ENCODE measurements at regions of chr17 and their contacts with region 1.

Region 1: DNA sequence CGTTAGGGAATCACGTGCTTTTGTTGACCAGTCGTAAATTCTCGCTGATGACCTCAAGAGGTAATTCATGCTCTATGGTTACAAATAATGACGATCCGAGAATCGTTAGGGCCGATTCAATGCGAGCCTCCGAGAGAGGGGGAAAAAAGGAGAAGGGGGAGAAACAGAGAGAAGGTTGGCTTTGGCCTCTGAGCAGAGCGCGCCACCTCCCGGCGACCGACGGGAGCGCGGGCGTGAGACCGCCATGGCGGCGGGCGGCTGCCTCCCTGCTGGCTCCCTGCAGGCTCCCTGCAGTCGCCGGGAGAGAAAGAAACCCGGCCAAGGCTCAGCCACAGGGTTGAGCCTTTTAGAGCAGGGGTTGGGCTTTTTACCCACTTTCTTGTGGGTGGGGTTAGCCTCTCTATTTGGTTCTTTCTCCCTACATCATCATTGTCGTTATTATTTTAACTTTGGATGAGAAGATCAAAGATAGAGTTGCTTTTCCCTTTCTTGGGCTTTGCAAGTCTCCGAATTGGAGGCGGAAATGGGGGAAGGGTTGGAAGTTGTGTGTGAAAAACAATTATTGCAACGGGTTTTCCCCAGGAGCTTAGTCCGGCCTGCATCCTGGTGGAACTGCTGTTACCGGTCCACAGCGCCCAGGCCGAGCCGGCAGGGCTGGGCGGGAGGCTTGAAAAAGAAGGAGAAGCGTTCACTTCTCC is 410 bp upstream of the HOXB5 start:
- DNase-seq: peak; percentile 85
- ATAC-seq: peak; percentile 66
- H3K4me3 Mint-ChIP-seq: peak overlapping the region; percentile 71
- H3K27ac Mint-ChIP-seq: no peak overlapping the region
- H3K4me1 Mint-ChIP-seq: peaks cover 53% of the 10 kb centered on the region
- H3K27me3 Mint-ChIP-seq: peaks cover 73% of the 10 kb centered on the region
- CTCF ChIP-seq: peak; percentile 50

Region 2: DNA sequence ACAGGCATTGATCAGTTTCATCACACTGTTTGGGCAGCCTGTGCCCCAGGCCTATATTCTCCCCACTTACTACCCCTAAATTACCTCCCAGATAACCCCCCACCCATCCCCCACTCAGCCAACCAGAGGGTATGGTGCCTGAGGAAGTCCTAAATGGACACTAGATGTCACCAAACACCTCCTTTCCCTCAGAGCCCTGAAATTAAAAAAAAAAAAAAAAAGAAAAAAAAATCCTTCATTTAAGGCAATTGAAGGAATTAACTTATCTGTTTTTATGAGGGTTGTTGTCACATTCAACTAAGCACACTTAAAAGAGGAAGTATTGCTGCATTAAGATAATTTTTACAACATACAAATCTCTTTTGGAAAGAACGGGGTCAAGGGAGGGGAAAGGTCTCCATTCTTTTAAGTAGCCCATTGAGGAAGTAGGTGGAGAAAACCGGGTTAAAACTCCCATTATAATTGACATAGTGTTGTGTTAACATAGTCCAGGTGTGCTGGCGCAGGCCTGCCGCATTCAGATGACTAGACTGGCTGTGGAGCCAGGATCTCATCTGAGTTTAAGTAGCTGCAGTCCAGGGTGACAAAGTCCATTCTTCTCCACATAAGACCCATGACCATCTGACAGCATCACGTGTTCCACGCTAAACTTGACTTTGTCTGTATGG is 440.2 kb before region 1 on chr17:
- CTCF ChIA-PET with region 1: no interaction called
- POLR2A ChIA-PET with region 1: no interaction called
- intact Hi-C with region 1: loop called (anchors 10 kb)
- DNase-seq: no peak
- ATAC-seq: no peak
- H3K4me3 Mint-ChIP-seq: no peak overlapping the region
- H3K27ac Mint-ChIP-seq: no peak overlapping the region
- H3K4me1 Mint-ChIP-seq: no peaks in the 10 kb centered on the region
- H3K27me3 Mint-ChIP-seq: no peaks in the 10 kb centered on the region
- CTCF ChIP-seq: no peak

Region 3: GRCh38 chr17:48335858-48336500 is 258.0 kb before region 1 on chr17:
- CTCF ChIA-PET with region 1: interaction called, 21 read pairs
- POLR2A ChIA-PET with region 1: interaction called, 3 read pairs
- intact Hi-C with region 1: loop called (anchors 1 kb)
- DNase-seq: no peak
- ATAC-seq: peak; percentile 47
- H3K4me3 Mint-ChIP-seq: no peak overlapping the region
- H3K27ac Mint-ChIP-seq: no peak overlapping the region
- H3K4me1 Mint-ChIP-seq: no peaks in the 10 kb centered on the region
- H3K27me3 Mint-ChIP-seq: no peaks in the 10 kb centered on the region
- CTCF ChIP-seq: peak; percentile 60

Region 4: DNA sequence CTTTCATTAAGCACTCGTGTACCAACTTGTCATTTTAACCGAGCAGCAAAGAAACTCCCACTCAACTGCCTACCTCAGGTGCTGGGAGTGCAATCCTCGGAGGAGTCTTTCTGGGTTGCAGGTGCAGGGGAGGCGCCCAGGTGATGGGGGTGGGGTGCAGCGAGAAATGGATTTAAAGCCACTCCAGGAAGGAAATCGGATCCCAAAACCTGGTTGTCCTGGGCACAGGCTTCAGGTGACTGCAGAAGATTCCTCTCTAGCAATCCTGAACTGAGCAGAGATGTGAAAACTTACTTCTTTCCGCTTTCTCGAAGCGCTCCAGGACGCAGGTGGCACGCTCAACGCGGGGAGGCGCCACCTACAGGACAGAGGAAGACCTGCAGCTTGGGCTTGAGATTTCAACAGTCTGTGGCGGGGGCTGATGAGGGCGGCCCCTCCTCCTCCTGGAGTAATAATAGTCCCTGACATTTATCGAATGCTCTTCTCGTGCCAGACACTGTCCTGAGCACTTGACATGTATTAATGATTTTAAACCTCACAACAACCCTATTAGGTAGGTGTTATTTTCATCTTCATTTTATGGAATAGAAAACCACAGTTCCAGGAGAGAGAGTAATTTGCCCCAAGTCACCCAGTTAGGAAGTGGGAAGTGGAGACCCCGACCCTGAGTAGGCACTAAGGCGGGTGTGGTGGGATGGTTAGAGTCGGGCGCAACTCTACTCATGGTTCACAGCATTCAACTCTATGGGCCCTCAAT is 136.7 kb before region 1 on chr17:
- CTCF ChIA-PET with region 1: interaction called, 3 read pairs
- POLR2A ChIA-PET with region 1: no interaction called
- intact Hi-C with region 1: loop called (anchors 2 kb)
- DNase-seq: peak; percentile 60
- ATAC-seq: peak; percentile 100
- H3K4me3 Mint-ChIP-seq: peak overlapping the region; percentile 50
- H3K27ac Mint-ChIP-seq: no peak overlapping the region
- H3K4me1 Mint-ChIP-seq: peaks cover 35% of the 10 kb centered on the region
- H3K27me3 Mint-ChIP-seq: peaks cover 5% of the 10 kb centered on the region
- CTCF ChIP-seq: peak; percentile 88

Region 5: DNA sequence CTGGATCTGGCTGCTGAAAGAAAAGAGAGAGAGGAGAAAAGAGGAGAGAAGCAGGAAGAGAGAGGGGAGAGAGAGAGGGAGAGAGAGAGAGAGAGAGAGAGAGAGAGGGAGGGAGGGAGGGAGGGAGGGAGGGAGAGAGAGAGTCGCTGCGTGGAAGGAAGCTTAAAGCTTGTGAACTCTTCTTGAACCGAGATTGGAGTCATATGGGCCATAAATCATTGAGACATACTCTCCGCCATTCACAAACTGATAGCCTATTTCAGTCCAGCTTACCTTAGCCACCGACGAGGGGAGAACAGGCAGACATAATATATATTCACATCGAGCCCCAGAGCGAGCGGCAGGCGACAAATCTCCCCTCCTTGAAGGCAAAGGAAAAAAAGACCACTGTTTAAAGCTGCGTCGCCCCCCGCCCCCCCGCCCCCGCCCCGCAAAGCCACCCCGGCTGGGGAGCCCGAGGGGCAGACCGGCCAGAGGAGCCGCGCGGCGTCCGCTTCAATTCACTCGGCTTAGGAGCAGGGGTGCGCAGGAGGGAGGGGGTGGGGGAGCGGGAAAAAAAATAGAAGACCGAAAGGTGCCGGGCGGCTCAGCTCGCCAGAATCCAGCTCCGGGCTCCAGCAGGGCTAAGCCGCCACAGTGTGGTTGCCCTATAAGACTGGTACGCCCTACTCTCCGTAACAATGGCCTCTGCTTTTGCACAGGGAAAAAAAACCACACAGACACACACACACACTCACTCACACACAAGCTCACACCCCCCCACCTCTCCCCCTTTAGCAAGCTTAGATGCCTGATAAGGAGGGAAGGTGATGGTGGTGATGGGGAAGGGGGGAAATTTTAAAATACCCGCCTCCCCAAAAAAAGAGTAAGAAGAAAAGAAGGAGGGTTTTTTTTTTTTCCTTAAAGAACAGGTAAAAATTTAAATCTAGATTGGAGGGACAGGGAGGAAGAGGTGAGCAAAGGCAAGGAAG is 38.4 kb before region 1 on chr17:
- CTCF ChIA-PET with region 1: no interaction called
- POLR2A ChIA-PET with region 1: no interaction called
- intact Hi-C with region 1: no loop called
- DNase-seq: no peak
- ATAC-seq: peak; percentile 21
- H3K4me3 Mint-ChIP-seq: peak overlapping the region; percentile 53
- H3K27ac Mint-ChIP-seq: no peak overlapping the region
- H3K4me1 Mint-ChIP-seq: peaks cover 4% of the 10 kb centered on the region
- H3K27me3 Mint-ChIP-seq: peaks cover 32% of the 10 kb centered on the region
- CTCF ChIP-seq: no peak

Region 6: GRCh38 chr17:48610282-48611211 is 16.6 kb after region 1 on chr17 and contains the start of gene HOXB7:
- CTCF ChIA-PET with region 1: interaction called, 27 read pairs
- POLR2A ChIA-PET with region 1: interaction called, 6 read pairs
- intact Hi-C with region 1: loop called (anchors 2 kb)
- DNase-seq: peak; percentile 68
- ATAC-seq: peak; percentile 43
- H3K4me3 Mint-ChIP-seq: peak within 1 kb of the TSS; percentile 95
- H3K27ac Mint-ChIP-seq: peak within 1 kb of the TSS; percentile 59
- H3K4me1 Mint-ChIP-seq: peaks cover 37% of the 10 kb centered on the region
- H3K27me3 Mint-ChIP-seq: peaks cover 42% of the 10 kb centered on the region
- CTCF ChIP-seq: no peak
- total RNA-seq, gene HOXB7: 0.60 and 0.93 TPM in 2 replicates

Region 7: GRCh38 chr17:48747445-48748363 is 153.7 kb after region 1 on chr17:
- CTCF ChIA-PET with region 1: no interaction called
- POLR2A ChIA-PET with region 1: no interaction called
- intact Hi-C with region 1: loop called (anchors 5 kb)
- DNase-seq: no peak
- ATAC-seq: no peak
- H3K4me3 Mint-ChIP-seq: no peak overlapping the region
- H3K27ac Mint-ChIP-seq: no peak overlapping the region
- H3K4me1 Mint-ChIP-seq: peaks cover 3% of the 10 kb centered on the region
- H3K27me3 Mint-ChIP-seq: peaks cover 60% of the 10 kb centered on the region
- CTCF ChIP-seq: no peak

Region 8: GRCh38 chr17:49053171-49053829 is 459.3 kb after region 1 on chr17:
- CTCF ChIA-PET with region 1: no interaction called
- POLR2A ChIA-PET with region 1: no interaction called
- intact Hi-C with region 1: no loop called
- DNase-seq: no peak
- ATAC-seq: no peak
- H3K4me3 Mint-ChIP-seq: no peak overlapping the region
- H3K27ac Mint-ChIP-seq: no peak overlapping the region
- H3K4me1 Mint-ChIP-seq: no peaks in the 10 kb centered on the region
- H3K27me3 Mint-ChIP-seq: peaks cover 5% of the 10 kb centered on the region
- CTCF ChIP-seq: no peak